Endothelial cell of umbilical vein (primary cell): ENCODE measurements at regions of chr12 and their contacts with region 1.

Region 1: GRCh38 chr12:14845350-14845750 is 2.0 kb upstream of the ART4 start:
- DNase-seq: peak; percentile 81
- H3K4me3 ChIP-seq: no peak overlapping the region
- H3K27ac ChIP-seq: no peak overlapping the region
- H3K4me1 ChIP-seq: peaks cover 68% of the 10 kb centered on the region
- H3K27me3 ChIP-seq: no peaks in the 10 kb centered on the region
- CTCF ChIP-seq: peak; percentile 55 to 61
- POLR2A ChIP-seq: no peak

Region 2: GRCh38 chr12:14723763-14724162 is 121.6 kb before region 1 on chr12:
- CTCF ChIA-PET with region 1: no interaction called
- POLR2A ChIA-PET with region 1: no interaction called
- dilution Hi-C with region 1: no loop called
- intact Hi-C with region 1: loop called (anchors 1 kb)
- DNase-seq: peak; percentile 56
- H3K4me3 ChIP-seq: no peak overlapping the region
- H3K27ac ChIP-seq: no peak overlapping the region
- H3K4me1 ChIP-seq: no peaks in the 10 kb centered on the region
- H3K27me3 ChIP-seq: peaks cover 0 to 2% of the 10 kb centered on the region in 2 experiments
- CTCF ChIP-seq: peak; percentile 57 to 75
- POLR2A ChIP-seq: no peak

Region 3: GRCh38 chr12:14810953-14811483 is 34.3 kb before region 1 on chr12:
- CTCF ChIA-PET with region 1: interaction called, 39 read pairs
- POLR2A ChIA-PET with region 1: no interaction called
- dilution Hi-C with region 1: no loop called
- intact Hi-C with region 1: loop called (anchors 1 kb)
- DNase-seq: peak; percentile 54
- H3K4me3 ChIP-seq: no peak overlapping the region
- H3K27ac ChIP-seq: no peak overlapping the region
- H3K4me1 ChIP-seq: no peaks in the 10 kb centered on the region
- H3K27me3 ChIP-seq: no peaks in the 10 kb centered on the region
- CTCF ChIP-seq: peak; percentile 57 to 61
- POLR2A ChIP-seq: no peak

Region 4: DNA sequence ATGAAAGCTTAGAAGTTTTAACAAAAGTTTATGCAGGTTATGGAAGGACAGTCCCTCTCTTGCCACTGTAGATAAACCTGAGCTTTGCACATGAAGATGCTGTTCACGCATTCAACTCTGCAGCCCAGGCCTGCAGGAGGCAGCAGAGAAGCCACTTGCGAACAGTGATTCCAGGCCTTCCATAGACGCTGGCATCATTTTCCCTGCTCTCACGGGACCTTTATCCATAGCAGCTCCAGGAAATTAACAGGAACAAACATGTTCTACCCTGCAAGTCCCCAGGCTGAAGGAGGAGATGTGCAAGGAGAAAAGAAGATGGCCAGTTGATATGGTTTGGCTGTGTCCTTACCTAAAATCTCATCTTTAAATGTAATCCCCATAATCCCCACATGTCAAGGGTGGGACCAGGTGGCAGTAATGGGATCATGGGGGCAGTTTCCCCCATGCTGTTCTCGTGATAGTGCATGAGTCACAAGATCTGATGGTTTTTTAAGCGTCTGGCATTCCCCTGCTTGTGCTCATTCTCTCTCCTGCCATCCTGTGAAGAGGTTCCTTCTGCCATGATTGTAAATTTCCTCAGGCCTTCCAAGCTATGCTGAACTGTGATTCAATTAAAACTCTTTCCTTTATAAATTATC is 91.0 kb after region 1 on chr12:
- CTCF ChIA-PET with region 1: interaction called, 10 read pairs
- POLR2A ChIA-PET with region 1: no interaction called
- dilution Hi-C with region 1: no loop called
- intact Hi-C with region 1: no loop called
- DNase-seq: no peak
- H3K4me3 ChIP-seq: no peak overlapping the region
- H3K27ac ChIP-seq: no peak overlapping the region
- H3K4me1 ChIP-seq: peaks cover 6% of the 10 kb centered on the region
- H3K27me3 ChIP-seq: no peaks in the 10 kb centered on the region
- CTCF ChIP-seq: peak; percentile 13
- POLR2A ChIP-seq: no peak

Region 5: GRCh38 chr12:14986449-14986848 is 141.1 kb after region 1 on chr12:
- CTCF ChIA-PET with region 1: interaction called, 44 read pairs
- POLR2A ChIA-PET with region 1: no interaction called
- dilution Hi-C with region 1: no loop called
- intact Hi-C with region 1: loop called (anchors 2 kb)
- DNase-seq: peak; percentile 40
- H3K4me3 ChIP-seq: no peak overlapping the region
- H3K27ac ChIP-seq: no peak overlapping the region
- H3K4me1 ChIP-seq: no peaks in the 10 kb centered on the region
- H3K27me3 ChIP-seq: no peaks in the 10 kb centered on the region
- CTCF ChIP-seq: peak in 1 of 2 donors; percentile 24
- POLR2A ChIP-seq: no peak

Region 6: GRCh38 chr12:15220994-15221885 is 375.9 kb after region 1 on chr12 and contains the start of gene RERG:
- CTCF ChIA-PET with region 1: interaction called, 13 read pairs
- POLR2A ChIA-PET with region 1: no interaction called
- dilution Hi-C with region 1: no loop called
- intact Hi-C with region 1: loop called (anchors 1 kb)
- DNase-seq: peak; percentile 78
- H3K4me3 ChIP-seq: peak within 1 kb of the TSS in 2 of 3 experiments; percentile 3 to 32
- H3K27ac ChIP-seq: no peak within 1 kb of the TSS
- H3K4me1 ChIP-seq: peaks cover 7% of the 10 kb centered on the region
- H3K27me3 ChIP-seq: peaks cover 5 to 16% of the 10 kb centered on the region in 2 experiments
- CTCF ChIP-seq: peak; percentile 99
- POLR2A ChIP-seq: no peak
- total RNA-seq, gene RERG: not detected in 2 replicates